H1 (cell line): ENCODE measurements at regions of chr10 and their contacts with region 1.

Region 1: DNA sequence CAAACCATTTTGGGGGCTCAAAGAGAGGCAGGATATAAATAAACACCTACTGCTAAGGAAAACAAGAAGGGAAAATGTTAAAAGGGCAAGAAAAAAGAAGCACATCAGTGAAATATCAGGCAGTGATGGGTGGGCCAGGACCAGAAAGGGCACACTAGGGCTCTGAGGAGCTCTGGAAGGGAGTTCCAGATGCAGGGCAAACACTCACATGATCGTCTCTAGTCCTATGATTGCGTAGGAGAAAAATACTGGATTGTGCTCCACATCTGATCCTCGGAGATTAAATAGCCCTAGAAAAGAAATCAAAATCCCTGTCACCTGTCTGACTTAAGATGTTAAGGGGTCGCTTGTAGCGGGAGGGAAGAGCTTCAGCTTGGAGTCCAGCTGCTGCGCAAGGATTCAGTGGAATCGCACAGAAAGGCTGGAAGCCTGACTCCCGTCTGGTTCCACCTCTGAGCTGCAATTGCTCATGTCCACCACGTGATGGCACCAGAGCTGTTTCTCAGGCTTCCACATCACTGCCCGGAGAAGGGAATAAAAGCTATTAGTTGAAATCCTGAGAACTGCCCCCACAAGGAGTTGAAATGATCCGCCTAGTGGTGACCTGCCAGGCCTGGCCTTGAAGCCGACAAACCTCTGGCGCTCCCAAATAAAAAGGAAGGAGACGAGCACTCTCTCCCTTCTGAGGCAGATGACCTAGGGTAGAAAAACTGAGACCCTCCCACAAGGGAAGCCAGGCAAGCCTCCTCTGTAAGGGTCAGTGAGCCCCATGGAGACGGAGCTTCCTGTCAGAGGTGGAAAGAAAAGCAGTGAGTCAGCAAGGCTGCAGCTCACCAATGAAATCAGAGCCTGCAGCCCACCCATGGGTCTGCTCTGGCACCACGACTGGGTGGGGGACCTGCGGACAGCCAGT is 39.2 kb downstream of the XPNPEP1 start:
- DNase-seq: peak; percentile 81 to 84
- H3K4me3 ChIP-seq: peak overlapping the region in 1 of 4 experiments; percentile 26; a peak in 2 of 8 replicates
- H3K27ac ChIP-seq: peak overlapping the region; percentile 44; the same call in 1 of the 2 replicates
- H3K4me1 ChIP-seq: peaks cover 0 to 5% (median 1%) of the 10 kb centered on the region in 4 experiments; a peak in 2 of 7 replicates
- H3K27me3 ChIP-seq: no peaks in the 10 kb centered on the region
- CTCF ChIP-seq: peak; percentile 77 to 99 (median 98)
- EP300 ChIP-seq: no peak
- POLR2A ChIP-seq: no peak
- RAD21 ChIP-seq: peak; percentile 96 to 98

Region 2: GRCh38 chr10:109871469-109871868 is 12.6 kb before region 1 on chr10:
- CTCF ChIA-PET with region 1: interaction called, 15 read pairs
- POLR2A ChIA-PET with region 1: no interaction called
- DNase-seq: no peak
- H3K4me3 ChIP-seq: no peak overlapping the region
- H3K27ac ChIP-seq: no peak overlapping the region
- H3K4me1 ChIP-seq: no peaks in the 10 kb centered on the region
- H3K27me3 ChIP-seq: no peaks in the 10 kb centered on the region
- CTCF ChIP-seq: no peak
- EP300 ChIP-seq: no peak
- POLR2A ChIP-seq: no peak
- RAD21 ChIP-seq: no peak

Region 3: DNA sequence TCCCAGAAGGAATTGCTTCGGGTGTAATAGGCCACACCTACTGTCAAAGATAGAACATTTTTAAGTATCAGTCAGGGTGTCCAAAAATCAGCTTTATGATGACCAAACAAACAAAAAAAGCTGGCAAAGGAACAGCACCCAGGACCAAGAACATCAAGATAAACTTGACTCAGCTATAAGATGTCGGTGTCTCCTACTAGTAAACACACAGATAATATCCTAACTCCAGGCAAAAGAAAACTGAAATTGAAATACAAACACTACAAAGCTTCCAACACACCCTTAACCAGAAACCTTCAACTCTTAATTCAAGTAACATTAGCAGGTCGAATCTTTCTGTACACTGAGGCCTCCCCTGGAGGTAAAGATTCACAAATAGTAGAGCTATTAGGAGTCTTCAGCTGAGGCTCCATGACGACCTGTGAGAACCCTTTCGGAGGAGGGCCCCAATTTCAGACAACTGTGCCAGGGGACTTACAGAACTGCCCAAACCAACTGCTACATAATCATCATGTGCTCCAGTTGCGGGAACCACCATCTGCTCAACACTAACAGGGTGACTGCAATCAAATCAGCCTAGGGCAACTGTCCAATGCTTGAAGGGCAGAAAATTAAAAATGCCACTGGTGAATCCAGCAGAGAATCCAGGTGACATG is 18.9 kb after region 1 on chr10:
- CTCF ChIA-PET with region 1: interaction called, 13 read pairs
- POLR2A ChIA-PET with region 1: interaction called, 3 read pairs
- DNase-seq: no peak
- H3K4me3 ChIP-seq: no peak overlapping the region
- H3K27ac ChIP-seq: no peak overlapping the region
- H3K4me1 ChIP-seq: peaks cover 0 to 4% (median 0%) of the 10 kb centered on the region in 4 experiments; a peak in 1 of 7 replicates
- H3K27me3 ChIP-seq: no peaks in the 10 kb centered on the region
- CTCF ChIP-seq: no peak
- EP300 ChIP-seq: no peak
- POLR2A ChIP-seq: no peak
- RAD21 ChIP-seq: no peak

Region 4: DNA sequence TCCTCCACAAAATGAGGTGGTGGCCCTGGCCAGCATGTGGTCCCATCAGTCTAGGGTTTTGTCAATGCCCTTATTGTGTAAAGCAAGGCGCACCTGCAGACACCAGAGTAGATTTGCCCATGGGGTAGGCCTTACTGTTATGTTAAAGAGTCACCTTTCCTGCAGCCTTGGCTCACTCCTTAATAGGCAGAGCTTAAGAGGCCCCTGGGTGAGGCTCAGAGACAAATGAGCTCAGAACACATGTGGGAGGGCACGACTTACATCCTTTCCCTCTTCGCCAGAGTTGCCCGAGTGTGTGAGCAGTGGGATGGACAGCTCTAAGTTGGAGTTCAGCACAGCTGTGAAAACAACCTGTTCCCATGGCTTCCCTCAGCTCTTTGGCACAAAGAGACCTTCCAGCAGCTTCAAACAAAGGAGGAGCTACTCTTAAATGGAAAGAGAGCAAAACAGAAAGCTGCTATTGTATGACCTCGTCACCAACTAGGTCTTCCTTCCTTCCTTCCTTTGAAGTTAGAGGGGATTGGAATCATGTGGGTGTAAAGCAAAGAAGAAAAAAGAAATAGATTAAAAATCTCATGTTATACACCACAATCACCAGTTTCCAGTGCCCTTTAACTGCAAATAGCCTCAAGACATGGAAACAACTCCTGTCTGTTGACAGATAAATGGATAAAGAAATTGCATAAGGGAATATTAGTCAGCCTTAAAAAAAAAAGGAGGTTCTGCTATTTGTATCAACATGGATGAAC is 51.0 kb after region 1 on chr10:
- CTCF ChIA-PET with region 1: interaction called, 12 read pairs
- POLR2A ChIA-PET with region 1: no interaction called
- DNase-seq: peak; percentile 70 to 73
- H3K4me3 ChIP-seq: peak overlapping the region in 1 of 4 experiments; percentile 44; a peak in 2 of 8 replicates
- H3K27ac ChIP-seq: peak overlapping the region; percentile 70; the same call in 1 of the 2 replicates
- H3K4me1 ChIP-seq: peaks cover 11 to 25% (median 24%) of the 10 kb centered on the region in 4 experiments
- H3K27me3 ChIP-seq: no peaks in the 10 kb centered on the region
- CTCF ChIP-seq: no peak
- EP300 ChIP-seq: peak in 1 of 2 experiments; percentile 89; a peak in 1 of 3 replicates
- POLR2A ChIP-seq: peak in 1 of 2 experiments; percentile 89; a peak in 2 of 3 replicates
- RAD21 ChIP-seq: no peak

Region 5: DNA sequence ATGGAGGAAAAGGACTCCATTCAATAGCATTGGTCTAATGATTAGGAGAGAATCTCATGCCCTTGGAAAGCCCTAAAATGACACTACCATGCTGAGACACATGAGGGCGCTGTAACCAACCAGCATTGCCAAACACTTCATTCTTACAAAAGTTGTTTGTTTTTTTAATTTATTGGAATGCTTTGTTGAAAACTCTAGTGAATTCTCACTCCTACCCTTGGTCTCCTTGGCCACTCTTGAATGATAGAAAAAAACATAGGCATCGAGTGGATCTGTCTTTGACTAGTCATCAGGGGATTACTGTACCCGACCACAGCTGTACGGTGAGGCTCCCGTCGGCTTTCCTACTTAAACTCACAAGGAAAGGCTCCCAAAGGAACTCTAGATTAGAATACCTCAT is 94.4 kb after region 1 on chr10:
- CTCF ChIA-PET with region 1: interaction called, 15 read pairs
- POLR2A ChIA-PET with region 1: no interaction called
- DNase-seq: peak in 1 of 2 experiments; percentile 88
- H3K4me3 ChIP-seq: no peak overlapping the region
- H3K27ac ChIP-seq: no peak overlapping the region
- H3K4me1 ChIP-seq: no peaks in the 10 kb centered on the region
- H3K27me3 ChIP-seq: no peaks in the 10 kb centered on the region
- CTCF ChIP-seq: peak in 2 of 3 experiments; percentile 73 to 85; a peak in 3 of 4 replicates
- EP300 ChIP-seq: no peak
- POLR2A ChIP-seq: no peak
- RAD21 ChIP-seq: peak; percentile 68 to 79

Region 6: GRCh38 chr10:110036640-110037039 is 152.5 kb after region 1 on chr10:
- CTCF ChIA-PET with region 1: interaction called, 12 read pairs
- POLR2A ChIA-PET with region 1: no interaction called
- DNase-seq: no peak
- H3K4me3 ChIP-seq: no peak overlapping the region
- H3K27ac ChIP-seq: no peak overlapping the region
- H3K4me1 ChIP-seq: peaks cover 0 to 3% (median 0%) of the 10 kb centered on the region in 4 experiments; a peak in 2 of 7 replicates
- H3K27me3 ChIP-seq: no peaks in the 10 kb centered on the region
- CTCF ChIP-seq: no peak
- EP300 ChIP-seq: no peak
- POLR2A ChIP-seq: no peak
- RAD21 ChIP-seq: no peak

Region 7: GRCh38 chr10:110210674-110211464 is 326.8 kb after region 1 on chr10:
- CTCF ChIA-PET with region 1: interaction called, 11 read pairs
- POLR2A ChIA-PET with region 1: no interaction called
- DNase-seq: peak; percentile 93 to 97
- H3K4me3 ChIP-seq: peak overlapping the region; percentile 73 to 80 (median 78)
- H3K27ac ChIP-seq: peak overlapping the region; percentile 2; the same call in 1 of the 2 replicates
- H3K4me1 ChIP-seq: peaks cover 1 to 20% (median 14%) of the 10 kb centered on the region in 4 experiments; a peak in 6 of 7 replicates
- H3K27me3 ChIP-seq: peaks cover 18 to 67% (median 49%) of the 10 kb centered on the region in 4 experiments
- CTCF ChIP-seq: no peak
- EP300 ChIP-seq: 0 out of 3 replicates have a peak, but pooled peaks of 1 of the 2 experiments have one; percentile 30
- POLR2A ChIP-seq: peak; percentile 47 to 59
- RAD21 ChIP-seq: no peak